ENCODE measurements at regions of chr1 and their contacts with region 1.

Region 1: DNA sequence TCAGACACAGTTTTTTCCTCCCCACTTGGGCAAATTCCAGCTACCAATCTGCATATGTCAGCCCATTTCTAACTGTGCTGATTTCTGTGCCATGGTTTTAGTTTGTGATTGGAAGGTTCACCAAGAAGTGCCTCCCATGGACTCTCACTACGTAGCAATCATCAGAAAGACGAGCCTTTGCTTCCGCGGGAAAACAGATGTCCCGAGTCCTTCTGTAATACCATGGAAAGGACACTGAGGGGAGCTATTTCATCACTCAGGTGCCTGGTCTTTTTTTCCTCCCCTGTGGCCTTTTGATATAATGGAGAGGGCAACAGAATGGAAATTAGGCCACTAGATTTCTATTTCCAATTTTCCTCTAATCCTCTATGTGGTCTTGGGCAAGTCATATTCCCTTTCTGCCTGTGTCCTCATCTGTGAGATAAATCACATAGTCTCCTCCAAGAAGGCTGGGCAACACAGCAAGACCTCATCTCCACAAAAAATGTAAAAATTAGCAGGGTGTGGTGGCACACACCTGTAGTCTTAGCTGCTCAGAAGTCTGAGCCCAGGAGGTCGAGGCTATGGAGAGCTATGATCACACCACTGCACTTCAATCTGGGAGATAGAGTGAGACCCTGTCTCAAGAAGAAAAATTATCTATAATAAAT is 24.8 kb downstream of the LEMD1 start:
- DNase-seq: peak; percentile 30 to 51
- H3K4me3 ChIP-seq: no peak overlapping the region
- H3K27ac ChIP-seq: no peak overlapping the region
- H3K4me1 ChIP-seq: no peaks in the 10 kb centered on the region
- H3K27me3 ChIP-seq: no peaks in the 10 kb centered on the region
- CTCF ChIP-seq: peak; percentile 89

Region 2: GRCh38 chr1:205335643-205336091 is 61.4 kb before region 1 on chr1:
- CTCF ChIA-PET with region 1: interaction called, 5 read pairs
- POLR2A ChIA-PET with region 1: no interaction called
- intact Hi-C with region 1: loop called (anchors 5 kb)
- DNase-seq: peak; percentile 63 to 85
- H3K4me3 ChIP-seq: no peak overlapping the region
- H3K27ac ChIP-seq: no peak overlapping the region
- H3K4me1 ChIP-seq: peaks cover 3% of the 10 kb centered on the region
- H3K27me3 ChIP-seq: peaks cover under 1% of the 10 kb centered on the region; the same call in 1 of the 2 replicates
- CTCF ChIP-seq: peak; percentile 88

Region 3: DNA sequence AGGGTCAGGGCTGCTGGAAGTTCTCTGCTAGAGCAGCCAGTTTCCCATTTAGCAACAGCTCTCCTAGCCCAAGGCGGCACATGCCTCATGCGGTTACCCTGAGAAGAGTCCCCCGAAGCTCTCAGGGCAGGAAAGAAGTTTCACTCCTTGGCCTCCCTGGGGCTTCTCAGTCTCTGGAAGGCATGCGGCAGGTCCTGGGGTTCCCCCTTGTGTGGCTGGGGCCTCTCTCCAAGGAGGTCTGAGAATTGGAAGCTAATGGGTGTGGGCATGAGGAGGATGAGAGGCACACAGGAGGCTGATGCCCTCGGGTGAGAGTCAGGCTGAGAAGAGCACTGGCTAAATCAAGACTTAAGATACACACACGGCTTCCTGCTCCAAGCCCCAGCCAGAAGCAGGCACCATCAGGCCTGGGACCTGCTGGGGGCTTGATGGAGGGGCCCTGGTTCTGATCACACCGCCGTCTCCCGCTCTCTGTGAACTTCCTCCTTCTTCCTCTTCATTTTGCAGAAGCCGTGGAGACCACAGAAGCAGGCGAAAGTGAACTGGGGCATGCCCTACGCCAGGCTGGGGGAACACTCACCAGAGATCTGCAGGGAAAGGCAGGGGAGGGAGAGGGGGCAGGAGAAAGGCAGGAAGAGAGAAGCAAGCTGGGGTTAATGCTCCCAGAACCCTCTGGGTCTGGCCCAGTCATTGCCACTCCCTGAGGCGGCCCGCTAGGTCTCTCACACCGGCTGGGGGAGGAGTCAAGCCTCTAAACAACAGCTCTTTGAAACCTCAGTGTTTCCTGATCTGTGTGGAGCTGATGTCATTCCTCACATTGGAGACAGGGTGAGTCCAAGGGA is 43.6 kb after region 1 on chr1:
- CTCF ChIA-PET with region 1: no interaction called
- POLR2A ChIA-PET with region 1: interaction called, 6 read pairs
- intact Hi-C with region 1: loop called (anchors 5 kb)
- DNase-seq: peak in 1 of 2 experiments; percentile 86
- H3K4me3 ChIP-seq: no peak overlapping the region
- H3K27ac ChIP-seq: peak overlapping the region; percentile 85
- H3K4me1 ChIP-seq: peaks cover 46% of the 10 kb centered on the region
- H3K27me3 ChIP-seq: no peaks in the 10 kb centered on the region
- CTCF ChIP-seq: no peak